ENCODE measurements at regions of chr11 and their contacts with region 1.

Region 1: GRCh38 chr11:6667733-6668374 is 12.2 kb upstream of the DCHS1 start:
- DNase-seq: peak; percentile 71
- ATAC-seq: peak; percentile 80
- H3K4me3 Mint-ChIP-seq: no peak overlapping the region
- H3K27ac Mint-ChIP-seq: peak overlapping the region; percentile 68
- H3K4me1 Mint-ChIP-seq: peaks cover 72% of the 10 kb centered on the region
- H3K27me3 Mint-ChIP-seq: peaks cover 3% of the 10 kb centered on the region

Region 2: DNA sequence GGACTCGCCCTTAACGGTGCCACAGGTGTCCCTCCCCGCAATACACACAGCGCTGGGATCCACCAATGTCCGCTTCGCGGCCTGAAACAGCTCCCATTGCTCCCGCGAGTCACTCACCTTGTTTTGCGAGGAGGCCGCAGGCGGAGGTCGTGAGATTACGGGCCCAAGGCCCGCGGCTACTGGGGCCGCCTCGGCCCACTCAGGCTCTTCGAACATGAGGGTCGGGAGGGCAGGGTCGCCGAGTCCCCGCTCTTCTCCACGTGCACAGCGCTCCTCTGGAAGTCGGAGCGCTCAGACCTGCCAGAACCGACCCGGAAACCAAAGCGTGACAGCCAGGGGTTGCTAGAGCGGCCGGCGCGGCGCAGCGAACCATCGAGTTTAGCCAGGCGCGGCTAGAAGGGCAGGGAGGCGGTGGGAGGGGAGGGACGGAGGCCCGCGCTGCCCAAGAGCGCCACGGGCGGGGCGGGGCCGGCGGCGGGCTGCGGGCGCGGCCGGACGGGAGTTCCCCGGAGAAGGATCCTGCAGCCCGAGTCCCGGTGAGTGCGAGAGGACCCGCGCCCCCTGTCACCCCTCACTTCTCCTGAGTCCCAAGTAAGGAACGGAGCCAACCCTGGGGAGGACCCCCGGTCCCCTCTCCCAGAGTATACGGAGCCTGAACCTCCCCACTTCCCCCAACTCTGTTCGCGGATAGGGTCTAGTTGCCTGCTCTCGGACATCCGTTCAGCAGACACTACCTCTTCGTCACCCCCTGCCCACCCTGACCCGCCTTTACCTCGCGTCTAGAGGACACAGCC is 64.4 kb before region 1 on chr11 and contains the starts of genes ILK and RRP8:
- CTCF ChIA-PET with region 1: interaction called, 19 read pairs
- POLR2A ChIA-PET with region 1: interaction called, 4 read pairs
- DNase-seq: peak; percentile 92
- ATAC-seq: peak; percentile 82
- H3K4me3 Mint-ChIP-seq: no peak within 1 kb of the TSS
- H3K27ac Mint-ChIP-seq: no peak within 1 kb of the TSS
- H3K4me1 Mint-ChIP-seq: peaks cover 35% of the 10 kb centered on the region
- H3K27me3 Mint-ChIP-seq: no peaks in the 10 kb centered on the region
- total RNA-seq, gene ILK: 195 to 197 TPM
- total RNA-seq, gene RRP8: 28.6 to 29.8 TPM

Region 3: DNA sequence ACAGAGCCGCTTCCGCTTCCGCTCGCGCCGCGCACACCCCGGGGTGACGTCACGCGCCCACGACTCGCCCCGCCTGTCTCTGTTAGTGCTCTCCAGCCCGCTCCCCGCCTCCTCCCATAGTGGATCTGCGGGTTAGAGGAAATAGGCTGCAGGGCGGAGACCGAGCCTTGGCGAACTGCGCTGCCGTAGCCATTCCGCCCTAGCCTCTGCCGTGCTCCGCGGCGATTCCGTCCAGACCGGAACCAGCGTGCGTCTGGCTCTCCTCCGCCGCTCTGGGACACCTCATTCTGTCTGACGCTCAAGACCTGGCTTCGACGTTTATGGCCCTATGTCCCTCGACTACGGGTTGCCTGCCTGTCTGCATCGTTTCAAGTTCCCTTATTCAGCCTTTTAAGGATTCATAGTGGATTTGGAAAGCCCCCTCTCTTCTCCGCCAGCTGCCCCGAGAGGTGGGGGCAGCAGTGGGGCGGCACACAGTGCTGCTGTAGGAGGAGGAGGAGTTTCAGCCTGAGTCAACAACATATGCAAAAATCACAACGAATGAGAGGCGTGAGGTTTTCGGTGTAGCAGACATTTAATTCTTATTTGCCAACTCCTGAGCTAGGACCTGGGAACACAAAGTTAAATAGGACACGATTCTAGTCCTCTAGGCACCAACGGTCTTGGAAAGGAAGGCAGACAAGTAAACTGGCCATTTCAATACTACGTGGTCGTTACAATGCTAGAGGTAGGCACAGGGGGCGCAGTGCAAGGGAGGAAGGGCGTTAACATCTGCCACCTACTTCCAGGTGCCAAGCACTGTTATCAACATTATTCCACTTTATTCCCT is 55.4 kb before region 1 on chr11 and contains the start of gene TAF10:
- CTCF ChIA-PET with region 1: interaction called, 21 read pairs
- POLR2A ChIA-PET with region 1: interaction called, 9 read pairs
- DNase-seq: peak; percentile 98
- ATAC-seq: peak; percentile 95
- H3K4me3 Mint-ChIP-seq: peak within 1 kb of the TSS; percentile 89
- H3K27ac Mint-ChIP-seq: peak within 1 kb of the TSS; percentile 92
- H3K4me1 Mint-ChIP-seq: peaks cover 42% of the 10 kb centered on the region
- H3K27me3 Mint-ChIP-seq: no peaks in the 10 kb centered on the region
- total RNA-seq, gene TAF10: 140 to 156 TPM

Region 4: DNA sequence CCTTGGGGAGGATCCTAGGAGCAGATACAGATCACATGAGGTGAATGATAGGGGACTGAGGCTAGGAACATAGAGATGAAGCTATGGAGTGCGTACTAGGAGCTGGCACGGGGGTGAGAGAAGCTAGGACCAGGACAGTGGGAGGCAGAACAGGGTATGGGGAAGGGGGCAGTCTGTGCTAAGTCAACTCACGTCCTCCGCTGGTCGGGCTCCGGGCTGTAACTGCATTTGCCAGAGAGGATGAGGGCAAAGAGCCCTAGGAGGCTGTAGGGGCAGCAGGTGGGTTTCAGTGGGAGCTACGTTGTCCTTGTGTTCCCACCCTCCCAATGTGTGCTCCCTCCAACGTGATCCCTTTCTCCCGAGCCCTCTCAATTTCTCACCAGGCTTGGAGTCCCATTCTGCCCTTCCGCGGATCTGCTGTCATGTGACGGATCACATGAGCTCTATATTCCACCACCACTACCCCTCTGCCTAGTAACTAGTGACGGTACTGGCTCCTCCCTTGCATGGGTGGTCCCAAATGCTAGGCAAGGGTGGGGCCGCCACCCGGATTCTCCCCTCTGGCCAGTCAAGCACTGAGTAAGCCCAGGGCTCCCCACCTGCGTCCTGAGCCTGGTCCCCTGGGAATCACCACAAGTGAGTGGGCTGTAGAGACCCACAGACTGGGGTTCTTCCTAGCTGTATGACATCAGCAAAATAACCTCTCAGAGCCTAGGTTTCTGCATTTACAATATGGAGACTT is 48.7 kb before region 1 on chr11 and contains the start of gene TPP1:
- CTCF ChIA-PET with region 1: interaction called, 29 read pairs
- POLR2A ChIA-PET with region 1: interaction called, 11 read pairs
- DNase-seq: peak; percentile 95
- ATAC-seq: peak; percentile 96
- H3K4me3 Mint-ChIP-seq: no peak within 1 kb of the TSS
- H3K27ac Mint-ChIP-seq: no peak within 1 kb of the TSS
- H3K4me1 Mint-ChIP-seq: peaks cover 2% of the 10 kb centered on the region
- H3K27me3 Mint-ChIP-seq: no peaks in the 10 kb centered on the region
- total RNA-seq, gene TPP1: 74.1 to 78.9 TPM

Region 5: DNA sequence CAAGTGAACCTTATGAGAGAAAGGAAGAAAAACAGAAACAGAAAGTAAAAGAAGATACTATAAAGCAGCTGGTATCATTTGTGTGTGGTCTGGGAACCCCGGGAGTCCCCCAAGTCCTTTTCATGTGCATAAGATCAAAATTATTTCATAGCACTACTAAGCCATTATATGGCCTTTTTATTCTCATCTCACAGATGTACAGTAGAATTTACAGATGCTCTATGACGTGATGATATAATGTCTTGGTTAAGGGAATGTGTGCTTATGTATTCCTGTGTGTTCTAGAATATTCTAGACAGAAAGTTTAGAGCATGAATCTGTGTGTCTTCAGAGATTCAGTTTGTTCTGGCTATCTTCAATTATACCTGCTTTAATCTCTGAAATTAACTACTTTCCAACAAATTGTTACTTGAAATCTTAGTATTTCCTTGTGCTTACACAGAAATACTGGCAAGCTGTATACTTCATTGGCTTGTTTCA is 40.1 kb before region 1 on chr11:
- CTCF ChIA-PET with region 1: interaction called, 14 read pairs
- POLR2A ChIA-PET with region 1: no interaction called
- DNase-seq: peak; percentile 47
- ATAC-seq: peak; percentile 69
- H3K4me3 Mint-ChIP-seq: peak overlapping the region; percentile 20
- H3K27ac Mint-ChIP-seq: peak overlapping the region; percentile 75
- H3K4me1 Mint-ChIP-seq: peaks cover 30% of the 10 kb centered on the region
- H3K27me3 Mint-ChIP-seq: no peaks in the 10 kb centered on the region

Region 6: DNA sequence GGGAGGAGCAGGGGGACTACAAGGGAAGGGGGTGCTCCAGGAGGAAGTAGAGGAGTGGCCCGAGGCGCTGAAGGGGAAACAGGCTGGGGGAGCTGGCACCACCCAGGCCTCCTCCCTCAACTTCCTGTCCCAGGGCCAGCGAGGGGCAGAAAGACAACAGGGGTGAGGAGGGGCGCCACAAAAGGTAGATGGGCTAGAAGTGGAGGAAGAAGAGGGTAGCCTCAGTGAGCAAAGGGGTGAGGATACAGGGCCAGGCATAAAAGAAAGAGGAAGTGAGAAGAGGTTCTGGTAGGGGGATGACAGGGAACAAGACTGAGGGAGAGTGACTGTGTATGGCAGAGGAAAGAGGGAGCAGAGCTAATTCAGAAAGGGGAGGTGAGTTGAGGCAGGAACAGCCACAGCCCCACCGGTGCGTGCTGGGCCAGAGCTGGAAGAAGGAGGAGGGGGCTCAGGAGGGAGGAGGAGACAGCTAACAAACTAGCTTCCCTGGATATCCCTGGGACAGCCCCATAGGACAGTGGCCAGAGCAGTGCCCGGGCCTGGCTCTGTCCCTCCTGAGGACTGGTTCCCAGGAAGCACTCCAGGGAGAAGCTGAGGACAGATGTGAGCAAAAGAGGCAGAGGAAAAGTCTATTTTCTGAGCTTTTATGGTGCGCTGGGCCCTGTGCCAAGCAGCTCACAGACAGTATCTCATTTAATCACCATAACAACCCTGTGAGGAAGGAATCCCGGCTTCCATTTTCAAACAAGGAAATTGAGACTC is 20.8 kb before region 1 on chr11:
- CTCF ChIA-PET with region 1: interaction called, 12 read pairs
- POLR2A ChIA-PET with region 1: no interaction called
- DNase-seq: peak; percentile 42
- ATAC-seq: peak; percentile 75
- H3K4me3 Mint-ChIP-seq: no peak overlapping the region
- H3K27ac Mint-ChIP-seq: no peak overlapping the region
- H3K4me1 Mint-ChIP-seq: no peaks in the 10 kb centered on the region
- H3K27me3 Mint-ChIP-seq: no peaks in the 10 kb centered on the region

Measured in activated CD8-positive, alpha-beta T cell treated with anti-CD3 and anti-CD28 coated beads, Interleukin-2, amount 10 ng/mL, durations not matched to agents 7 days and 5 days (primary cell).